ENCODE measurements at regions of chr15 and their contacts with region 1.

Region 1: GRCh38 chr15:90886041-90886614 is 1.8 kb downstream of the FES start:
- DNase-seq: peak; percentile 75 to 76
- H3K4me3 ChIP-seq: no peak overlapping the region
- H3K27ac ChIP-seq: peak overlapping the region in 2 of 3 donors; percentile 96 to 98
- H3K4me1 ChIP-seq: peaks cover 25 to 39% of the 10 kb centered on the region in 2 donors
- H3K27me3 ChIP-seq: no peaks in the 10 kb centered on the region
- CTCF ChIP-seq: peak; percentile 86 to 99 (median 98)
- POLR2A ChIP-seq: no peak

Region 2: GRCh38 chr15:90320061-90320884 is 565.9 kb before region 1 on chr15:
- intact Hi-C with region 1: loop called (anchors 10 kb)
- DNase-seq: peak; percentile 86
- H3K4me3 ChIP-seq: no peak overlapping the region
- H3K27ac ChIP-seq: peak overlapping the region in 2 of 3 donors; percentile 30 to 33
- H3K4me1 ChIP-seq: peaks cover 13 to 18% of the 10 kb centered on the region in 2 donors
- H3K27me3 ChIP-seq: no peaks in the 10 kb centered on the region
- CTCF ChIP-seq: peak; percentile 96 to 100 (median 98)
- POLR2A ChIP-seq: no peak

Region 3: DNA sequence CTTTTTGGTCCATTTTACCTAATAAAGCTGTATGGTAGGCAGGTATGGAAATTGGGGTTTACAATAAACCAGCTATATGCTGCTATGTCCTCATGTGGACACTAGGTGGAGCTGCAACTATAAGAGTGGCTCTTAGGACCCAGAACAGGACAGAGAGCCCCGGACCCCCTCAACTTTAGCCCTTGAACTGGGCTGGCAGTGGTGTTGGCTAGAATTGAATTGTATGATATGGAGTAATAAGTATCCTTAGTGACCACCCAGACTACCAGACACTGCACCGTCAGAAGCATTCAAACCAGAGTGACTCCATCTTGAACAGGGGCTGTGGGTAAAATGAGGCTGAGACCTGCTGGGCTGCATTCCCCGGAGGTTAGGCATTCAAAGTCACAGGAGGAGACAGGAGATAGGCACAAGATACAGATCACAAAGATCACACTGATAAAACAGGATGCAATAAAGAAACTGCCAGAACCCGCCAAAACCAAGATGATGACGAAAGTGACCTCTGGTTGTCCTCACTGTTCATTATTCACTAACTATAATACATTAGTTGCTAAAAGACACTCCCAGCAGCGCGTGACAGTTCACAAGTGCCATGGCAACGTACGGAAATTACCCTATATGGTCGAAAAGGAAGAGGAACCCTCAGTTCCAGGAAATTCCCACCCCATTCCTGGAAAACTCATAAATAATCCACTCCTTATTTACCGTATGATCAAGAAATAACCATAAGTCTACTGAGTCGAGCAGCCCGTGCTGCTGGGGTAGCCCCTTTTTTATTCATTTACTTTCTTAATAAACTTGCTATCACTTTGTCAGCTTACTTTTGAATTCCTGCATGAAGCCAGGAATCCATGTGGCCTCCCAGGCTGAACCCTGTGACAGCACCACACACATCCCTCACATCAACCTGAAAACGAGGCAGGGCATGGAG is 237.7 kb before region 1 on chr15:
- intact Hi-C with region 1: loop called (anchors 2 kb)
- DNase-seq: peak; percentile 57 to 60
- H3K4me3 ChIP-seq: no peak overlapping the region
- H3K27ac ChIP-seq: peak overlapping the region in 2 of 3 donors; percentile 49 to 68
- H3K4me1 ChIP-seq: peaks cover 0 to 3% of the 10 kb centered on the region in 2 donors
- H3K27me3 ChIP-seq: no peaks in the 10 kb centered on the region
- CTCF ChIP-seq: peak; percentile 74 to 92 (median 88)
- POLR2A ChIP-seq: no peak

Region 4: DNA sequence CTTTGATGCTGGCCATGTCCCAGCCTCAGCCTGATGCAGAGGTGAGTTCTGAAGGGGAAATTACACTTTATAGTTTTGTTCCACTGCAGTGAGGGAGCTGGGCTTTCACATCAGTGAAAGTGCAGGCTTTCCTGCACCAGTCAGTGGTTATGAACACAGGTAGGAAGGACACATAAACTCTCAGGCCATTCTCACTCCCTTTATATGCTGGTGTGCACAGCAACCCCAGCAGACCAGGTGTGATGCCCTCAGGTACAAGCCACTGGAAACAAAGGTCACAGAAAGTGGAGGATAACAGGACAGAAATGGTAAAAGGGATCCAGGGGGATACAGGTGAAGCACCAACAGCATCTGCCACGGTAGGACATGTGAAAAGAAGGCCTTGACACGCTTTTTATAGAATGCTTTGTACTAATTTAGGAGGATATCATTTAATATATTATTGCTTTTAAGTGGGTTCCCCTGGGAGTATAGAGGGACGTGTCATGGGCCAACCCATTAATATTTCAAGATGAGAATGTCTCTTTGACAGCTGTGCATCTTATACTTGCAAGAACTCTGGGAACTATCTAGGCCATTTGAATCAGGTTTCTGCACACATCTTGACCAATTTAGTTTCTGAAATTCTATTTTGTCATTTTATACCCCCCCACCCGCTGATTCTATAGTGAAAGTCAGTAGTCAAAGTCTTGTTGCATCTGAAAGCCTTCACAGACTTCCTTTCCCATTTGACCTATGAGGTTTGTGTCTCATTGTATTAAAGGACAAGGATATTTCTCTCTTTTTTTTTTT is 193.9 kb before region 1 on chr15:
- intact Hi-C with region 1: no loop called
- DNase-seq: no peak
- H3K4me3 ChIP-seq: no peak overlapping the region
- H3K27ac ChIP-seq: no peak overlapping the region
- H3K4me1 ChIP-seq: no peaks in the 10 kb centered on the region
- H3K27me3 ChIP-seq: no peaks in the 10 kb centered on the region
- CTCF ChIP-seq: no peak
- POLR2A ChIP-seq: no peak

Region 5: DNA sequence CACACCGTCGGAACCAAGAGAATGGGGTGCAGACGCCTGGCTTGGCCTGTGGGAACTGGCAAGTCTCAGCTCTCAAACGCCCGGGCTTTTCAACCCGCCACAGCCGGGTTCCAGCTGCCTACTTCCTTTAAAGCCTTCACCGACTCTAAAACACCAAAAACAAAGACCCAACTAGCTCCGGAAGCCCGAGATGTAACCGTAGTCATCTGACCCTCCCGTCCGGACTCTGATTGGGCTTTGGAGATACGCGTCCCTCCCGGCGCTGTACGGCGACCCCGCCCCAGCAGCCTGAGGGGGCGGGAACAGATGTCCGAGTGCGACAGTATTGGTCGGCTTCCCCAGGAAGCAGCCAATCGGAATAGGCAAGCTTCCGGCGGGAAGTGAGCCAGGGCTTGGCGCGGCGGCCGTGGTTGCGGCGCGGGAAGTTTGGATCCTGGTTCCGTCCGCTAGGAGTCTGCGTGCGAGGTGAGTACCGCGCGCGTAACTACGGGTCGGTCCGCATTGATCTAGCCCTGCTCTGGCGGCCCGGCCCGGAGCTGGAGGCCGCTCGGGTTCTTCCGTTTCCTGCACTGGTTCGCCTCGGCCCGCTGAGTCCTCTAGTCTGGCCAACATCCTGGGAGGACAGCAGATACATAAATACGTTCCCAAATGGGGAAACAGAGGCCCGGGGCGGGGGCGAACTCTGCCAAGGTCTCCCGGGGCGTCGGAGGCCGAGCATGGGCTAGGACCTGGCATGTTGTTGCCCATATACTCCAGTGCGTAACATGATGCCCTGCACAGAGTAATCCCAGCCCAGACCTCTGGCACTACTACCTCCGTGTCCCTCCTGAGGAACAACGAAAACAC is 168.9 kb before region 1 on chr15 and contains the start of gene BLM:
- intact Hi-C with region 1: loop called (anchors 5 kb)
- DNase-seq: peak; percentile 97
- H3K4me3 ChIP-seq: peak within 1 kb of the TSS; percentile 29 to 46 (median 39)
- H3K27ac ChIP-seq: peak within 1 kb of the TSS; percentile 67 to 91 (median 73)
- H3K4me1 ChIP-seq: peaks cover 10 to 12% of the 10 kb centered on the region in 2 donors
- H3K27me3 ChIP-seq: no peaks in the 10 kb centered on the region
- CTCF ChIP-seq: peak; percentile 13 to 56 (median 48)
- POLR2A ChIP-seq: peak in 1 of 2 donors; percentile 74
- total RNA-seq, gene BLM: 0.67 to 1.3 (median 1.2) TPM

Region 6: GRCh38 chr15:90774731-90775484 is 111.2 kb before region 1 on chr15:
- intact Hi-C with region 1: no loop called
- DNase-seq: no peak
- H3K4me3 ChIP-seq: no peak overlapping the region
- H3K27ac ChIP-seq: no peak overlapping the region
- H3K4me1 ChIP-seq: no peaks in the 10 kb centered on the region
- H3K27me3 ChIP-seq: no peaks in the 10 kb centered on the region
- CTCF ChIP-seq: no peak
- POLR2A ChIP-seq: no peak

Region 7: GRCh38 chr15:91022075-91022835 is 136.1 kb after region 1 on chr15 and contains the start of gene VPS33B:
- intact Hi-C with region 1: no loop called
- DNase-seq: peak; percentile 78 to 79
- H3K4me3 ChIP-seq: peak within 1 kb of the TSS; percentile 75 to 89 (median 83)
- H3K27ac ChIP-seq: peak within 1 kb of the TSS in 2 of 3 donors; percentile 49 to 72
- H3K4me1 ChIP-seq: peaks cover 10 to 16% of the 10 kb centered on the region in 2 donors
- H3K27me3 ChIP-seq: no peaks in the 10 kb centered on the region
- CTCF ChIP-seq: no peak
- POLR2A ChIP-seq: peak in 1 of 2 donors; percentile 36
- total RNA-seq, gene VPS33B: 7.4 to 13.9 (median 12.4) TPM

Measured in thyroid gland (tissue), 4 donors.